Heart left ventricle (tissue), 16 donors: ENCODE measurements at regions of chr16 and their contacts with region 1.

Region 1: DNA sequence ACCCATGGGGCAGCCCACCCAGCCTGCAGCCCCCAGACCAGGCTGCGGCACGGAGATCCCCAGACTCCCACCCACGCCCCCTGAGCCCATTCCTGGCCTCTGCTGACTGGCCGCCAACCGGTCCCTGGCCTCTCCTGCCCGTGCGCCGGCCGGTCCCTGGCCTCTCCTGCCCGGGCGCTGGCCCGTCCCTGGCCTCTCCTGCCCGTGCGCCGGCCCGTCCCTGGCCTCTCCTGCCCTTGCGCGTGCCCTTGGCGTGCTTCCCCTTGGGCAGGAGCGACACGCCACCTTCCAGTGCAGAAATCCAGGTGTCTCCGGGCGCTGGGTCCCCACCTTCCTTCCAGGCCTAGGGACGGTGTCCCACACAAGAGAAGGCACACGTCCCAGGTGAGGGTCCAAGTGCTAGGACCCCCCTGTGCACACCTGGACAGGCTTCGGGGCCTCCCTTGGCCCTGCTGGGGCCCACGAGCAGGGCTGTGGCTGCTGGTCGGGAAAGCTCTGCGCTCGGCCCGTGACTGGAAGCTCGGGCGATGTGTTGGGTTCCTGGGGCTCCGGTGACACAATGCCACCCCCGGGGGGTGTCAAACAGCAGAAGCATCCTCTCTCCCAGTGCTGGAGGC is 21.4 kb upstream of the CACNA1H start:
- DNase-seq: no peak
- ATAC-seq: no peak
- H3K4me3 ChIP-seq: no peak overlapping the region
- H3K27ac ChIP-seq: no peak overlapping the region
- H3K4me1 ChIP-seq: no peaks in the 10 kb centered on the region
- H3K27me3 ChIP-seq: peaks cover 0 to 17% (median 0%) of the 10 kb centered on the region in 9 donors
- CTCF ChIP-seq: no peak
- POLR2A ChIP-seq: no peak

Region 2: DNA sequence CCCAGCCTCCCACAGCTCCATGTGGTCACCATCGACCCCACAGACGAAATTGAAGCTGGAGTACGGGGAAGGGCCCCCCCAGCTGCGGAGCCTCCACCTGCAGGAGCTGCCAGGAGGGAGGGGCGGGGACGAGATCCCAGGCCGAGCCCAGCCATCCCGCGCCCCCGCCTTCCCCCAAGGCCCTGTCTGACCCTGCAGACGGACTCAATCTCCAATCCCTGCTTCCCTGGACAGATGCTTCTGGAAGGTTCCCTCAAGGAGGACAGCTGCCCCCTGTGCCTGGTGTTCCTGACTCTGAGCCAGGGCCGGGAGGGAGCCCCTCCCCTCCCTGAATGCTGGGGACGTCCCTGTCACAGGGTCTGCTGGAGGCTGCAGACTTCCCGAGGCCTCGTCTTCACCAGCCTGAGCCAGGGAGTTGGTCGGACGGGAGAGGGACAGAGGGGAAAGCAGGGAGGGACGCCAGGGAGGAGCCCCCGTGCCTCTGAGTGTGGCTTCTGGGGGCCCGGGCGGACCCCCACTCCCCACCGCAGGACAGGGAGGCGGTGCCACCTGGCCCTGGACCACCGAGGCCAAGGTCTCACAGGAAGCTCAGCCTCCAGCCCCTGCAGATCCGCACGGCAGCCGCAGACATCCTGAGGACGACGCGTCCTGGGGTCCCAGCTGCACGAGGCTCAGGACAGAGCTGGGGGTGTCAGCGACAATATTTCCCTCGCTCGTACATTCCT is 14.1 kb before region 1 on chr16:
- intact Hi-C with region 1: loop called in 1 of 10 experiments (anchors 2 kb)
- DNase-seq: no peak
- ATAC-seq: no peak
- H3K4me3 ChIP-seq: no peak overlapping the region
- H3K27ac ChIP-seq: no peak overlapping the region
- H3K4me1 ChIP-seq: no peaks in the 10 kb centered on the region
- H3K27me3 ChIP-seq: peaks cover 0 to 51% (median 11%) of the 10 kb centered on the region in 9 donors
- CTCF ChIP-seq: no peak
- POLR2A ChIP-seq: no peak